Right lobe of liver (tissue), 6 donors: ENCODE measurements at regions of chr2 and their contacts with region 1.

Region 1: DNA sequence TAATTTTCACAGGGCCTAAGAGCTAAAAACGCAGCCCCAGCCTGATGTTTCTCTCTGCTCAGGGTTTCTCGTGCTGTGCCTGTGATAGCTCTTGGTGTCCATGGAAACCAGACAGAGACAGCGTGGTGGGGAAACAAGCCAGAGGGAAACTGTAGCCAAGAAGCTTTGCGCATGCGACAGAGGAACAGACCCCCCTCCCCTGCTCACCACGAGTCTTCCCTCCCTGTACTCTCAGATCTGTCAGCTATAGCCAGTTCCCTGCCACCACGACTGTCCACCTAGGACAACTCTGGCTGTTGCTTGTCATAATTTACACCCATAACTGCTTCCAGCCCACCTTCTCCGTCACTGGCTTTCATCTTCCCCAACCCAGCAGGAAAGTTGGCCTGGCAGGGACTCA is 13.2 kb upstream of the DNAJC27 start:
- DNase-seq: no peak
- ATAC-seq: peak in 3 of 4 donors; percentile 31 to 57 (median 35)
- H3K4me3 ChIP-seq: no peak overlapping the region
- H3K27ac ChIP-seq: no peak overlapping the region
- H3K4me1 ChIP-seq: no peaks in the 10 kb centered on the region
- H3K27me3 ChIP-seq: no peaks in the 10 kb centered on the region
- CTCF ChIP-seq: no peak
- POLR2A ChIP-seq: no peak

Region 2: GRCh38 chr2:25098670-25099486 is 114.0 kb after region 1 on chr2:
- intact Hi-C with region 1: no loop called
- DNase-seq: peak in 1 of 3 donors; percentile 40
- ATAC-seq: peak; percentile 81 to 94 (median 87)
- H3K4me3 ChIP-seq: no peak overlapping the region
- H3K27ac ChIP-seq: peak overlapping the region; percentile 26 to 61 (median 60)
- H3K4me1 ChIP-seq: no peaks in the 10 kb centered on the region
- H3K27me3 ChIP-seq: no peaks in the 10 kb centered on the region
- CTCF ChIP-seq: no peak
- POLR2A ChIP-seq: no peak

Region 3: DNA sequence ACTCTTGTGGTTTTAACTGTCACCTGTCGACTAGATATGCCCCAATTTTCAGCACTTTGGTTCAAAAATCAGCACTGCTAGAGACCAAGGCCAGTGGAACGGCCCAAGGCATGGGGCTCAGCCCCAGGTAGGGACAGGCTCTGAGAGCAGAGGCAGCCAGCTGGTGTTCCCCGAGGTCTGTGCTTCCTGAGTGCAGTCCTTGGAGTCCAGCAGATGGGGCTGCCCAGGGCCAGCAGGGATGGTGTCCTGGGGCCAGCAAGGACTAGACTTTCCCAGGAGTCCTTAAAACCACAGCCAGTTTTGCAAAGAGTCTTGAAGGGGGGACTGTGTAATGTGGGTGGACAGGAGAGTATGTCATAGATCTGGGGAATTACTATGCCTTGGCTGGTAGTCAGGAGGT is 127.2 kb after region 1 on chr2:
- intact Hi-C with region 1: no loop called
- DNase-seq: no peak
- ATAC-seq: no peak
- H3K4me3 ChIP-seq: no peak overlapping the region
- H3K27ac ChIP-seq: no peak overlapping the region
- H3K4me1 ChIP-seq: no peaks in the 10 kb centered on the region
- H3K27me3 ChIP-seq: no peaks in the 10 kb centered on the region
- CTCF ChIP-seq: no peak
- POLR2A ChIP-seq: no peak

Region 4: GRCh38 chr2:25131567-25132298 is 146.8 kb after region 1 on chr2:
- intact Hi-C with region 1: loop called (anchors 10 kb)
- DNase-seq: peak in 1 of 3 donors; percentile 26
- ATAC-seq: peak; percentile 16 to 28 (median 21)
- H3K4me3 ChIP-seq: peak overlapping the region in 1 of 3 donors; percentile 3
- H3K27ac ChIP-seq: no peak overlapping the region
- H3K4me1 ChIP-seq: no peaks in the 10 kb centered on the region
- H3K27me3 ChIP-seq: no peaks in the 10 kb centered on the region
- CTCF ChIP-seq: no peak
- POLR2A ChIP-seq: no peak

Region 5: GRCh38 chr2:25187729-25188350 is 202.9 kb after region 1 on chr2:
- intact Hi-C with region 1: no loop called
- DNase-seq: no peak
- ATAC-seq: no peak
- H3K4me3 ChIP-seq: no peak overlapping the region
- H3K27ac ChIP-seq: no peak overlapping the region
- H3K4me1 ChIP-seq: no peaks in the 10 kb centered on the region
- H3K27me3 ChIP-seq: no peaks in the 10 kb centered on the region
- CTCF ChIP-seq: no peak
- POLR2A ChIP-seq: no peak